Transverse colon (tissue), 4 donors: ENCODE measurements at regions of chr3 and their contacts with region 1.

Region 1: GRCh38 chr3:4834403-4834866 is 144.8 kb upstream of the BHLHE40 start:
- DNase-seq: peak; percentile 72
- H3K4me3 ChIP-seq: no peak overlapping the region
- H3K27ac ChIP-seq: peak overlapping the region in 2 of 4 donors; percentile 16 to 34
- H3K4me1 ChIP-seq: peaks cover 0 to 21% (median 2%) of the 10 kb centered on the region in 4 donors
- H3K27me3 ChIP-seq: no peaks in the 10 kb centered on the region
- CTCF ChIP-seq: no peak
- EP300 ChIP-seq: no peak
- POLR2A ChIP-seq: peak; percentile 11

Region 2: DNA sequence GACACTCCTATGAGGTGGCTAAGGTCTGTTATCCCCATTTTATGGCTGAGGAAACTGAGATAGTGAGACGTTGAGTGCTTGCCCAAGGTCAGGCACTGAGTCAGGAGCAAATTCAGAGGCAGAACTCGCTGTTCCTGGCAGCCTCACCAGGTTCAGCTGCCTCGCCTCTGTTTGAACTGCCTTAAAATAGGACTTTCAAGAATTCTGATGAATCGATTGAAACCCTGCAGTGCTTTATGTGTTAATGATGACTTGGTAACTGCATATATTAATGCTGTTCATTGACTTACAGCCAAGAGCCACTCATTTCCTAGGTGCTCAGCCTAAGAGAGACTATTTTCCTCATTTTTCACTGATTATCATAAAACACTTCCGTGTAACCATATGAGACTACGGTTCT is 65.3 kb after region 1 on chr3:
- in situ Hi-C with region 1: no loop called
- intact Hi-C with region 1: loop called (anchors 2 kb)
- DNase-seq: no peak
- H3K4me3 ChIP-seq: no peak overlapping the region
- H3K27ac ChIP-seq: peak overlapping the region in 1 of 4 donors; percentile 27
- H3K4me1 ChIP-seq: peaks cover 0 to 20% (median 9%) of the 10 kb centered on the region in 4 donors
- H3K27me3 ChIP-seq: no peaks in the 10 kb centered on the region
- CTCF ChIP-seq: no peak
- EP300 ChIP-seq: no peak
- POLR2A ChIP-seq: no peak

Region 3: GRCh38 chr3:4978204-4978965 is 143.9 kb after region 1 on chr3:
- in situ Hi-C with region 1: loop called in 1 of 4 experiments (anchors 25 kb)
- intact Hi-C with region 1: no loop called
- DNase-seq: peak; percentile 95
- H3K4me3 ChIP-seq: peak overlapping the region; percentile 42 to 73 (median 64)
- H3K27ac ChIP-seq: peak overlapping the region; percentile 99 to 100 (median 100)
- H3K4me1 ChIP-seq: peaks cover 14 to 44% (median 40%) of the 10 kb centered on the region in 4 donors
- H3K27me3 ChIP-seq: no peaks in the 10 kb centered on the region
- CTCF ChIP-seq: no peak
- EP300 ChIP-seq: peak; percentile 91
- POLR2A ChIP-seq: peak; percentile 89

Region 4: DNA sequence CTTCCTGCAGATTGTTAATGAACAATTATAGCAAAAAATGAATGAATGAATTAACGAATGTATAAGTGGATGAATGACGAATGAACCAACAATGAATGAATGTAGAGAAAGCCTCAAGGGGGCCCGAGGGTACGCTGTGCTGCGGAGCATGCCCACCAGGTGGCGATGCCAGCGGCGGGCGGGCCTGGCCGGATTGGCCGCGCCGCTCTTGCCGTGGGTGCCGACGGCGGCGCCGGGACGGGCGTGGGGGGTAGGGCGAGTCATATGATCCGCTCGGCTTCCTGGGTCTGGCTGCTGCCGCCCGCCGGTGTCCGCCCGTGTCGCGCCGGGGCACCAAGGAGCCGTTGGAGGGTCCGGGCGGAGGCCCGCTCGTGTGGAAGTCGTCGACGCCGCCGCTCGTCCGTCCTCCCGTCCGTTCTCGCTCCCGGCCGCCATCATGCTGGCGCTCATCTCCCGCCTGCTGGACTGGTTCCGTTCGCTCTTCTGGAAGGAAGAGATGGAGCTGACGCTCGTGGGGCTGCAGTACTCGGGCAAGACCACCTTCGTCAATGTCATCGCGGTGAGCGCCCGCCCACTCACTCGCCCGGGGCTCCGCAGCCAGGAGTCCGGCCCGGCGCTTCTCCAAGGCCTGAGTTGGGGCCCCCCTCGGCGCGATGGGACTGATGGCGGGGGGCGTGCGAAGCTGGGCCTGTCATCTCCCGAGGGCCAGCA is 287.8 kb after region 1 on chr3 and contains the start of gene ARL8B:
- in situ Hi-C with region 1: no loop called
- intact Hi-C with region 1: no loop called
- DNase-seq: peak; percentile 93
- H3K4me3 ChIP-seq: peak within 1 kb of the TSS; percentile 87 to 97 (median 90)
- H3K27ac ChIP-seq: peak within 1 kb of the TSS; percentile 89 to 93 (median 92)
- H3K4me1 ChIP-seq: peaks cover 12 to 45% (median 19%) of the 10 kb centered on the region in 4 donors
- H3K27me3 ChIP-seq: no peaks in the 10 kb centered on the region
- CTCF ChIP-seq: peak; percentile 89 to 98 (median 96)
- EP300 ChIP-seq: no peak
- POLR2A ChIP-seq: peak; percentile 77
- total RNA-seq, gene ARL8B: 13.1 to 47.2 (median 31.9) TPM

Region 5: GRCh38 chr3:5250467-5251195 is 416.2 kb after region 1 on chr3:
- in situ Hi-C with region 1: no loop called
- intact Hi-C with region 1: no loop called
- DNase-seq: peak; percentile 15
- H3K4me3 ChIP-seq: peak overlapping the region in 3 of 4 donors; percentile 8 to 39 (median 22)
- H3K27ac ChIP-seq: peak overlapping the region in 3 of 4 donors; percentile 26 to 49 (median 42)
- H3K4me1 ChIP-seq: peaks cover 0 to 14% (median 1%) of the 10 kb centered on the region in 4 donors
- H3K27me3 ChIP-seq: no peaks in the 10 kb centered on the region
- CTCF ChIP-seq: no peak
- EP300 ChIP-seq: no peak
- POLR2A ChIP-seq: no peak